H1 (cell line): ENCODE measurements at regions of chr16 and their contacts with region 1.

Region 1: GRCh38 chr16:23280483-23280967 is 21.6 kb upstream of the SCNN1B start:
- DNase-seq: no peak
- H3K4me3 ChIP-seq: no peak overlapping the region
- H3K27ac ChIP-seq: no peak overlapping the region
- H3K4me1 ChIP-seq: peaks cover 0 to 6% (median 0%) of the 10 kb centered on the region in 4 experiments; a peak in 3 of 7 replicates
- H3K27me3 ChIP-seq: no peaks in the 10 kb centered on the region
- CTCF ChIP-seq: no peak
- EP300 ChIP-seq: no peak
- POLR2A ChIP-seq: no peak
- RAD21 ChIP-seq: no peak

Region 2: DNA sequence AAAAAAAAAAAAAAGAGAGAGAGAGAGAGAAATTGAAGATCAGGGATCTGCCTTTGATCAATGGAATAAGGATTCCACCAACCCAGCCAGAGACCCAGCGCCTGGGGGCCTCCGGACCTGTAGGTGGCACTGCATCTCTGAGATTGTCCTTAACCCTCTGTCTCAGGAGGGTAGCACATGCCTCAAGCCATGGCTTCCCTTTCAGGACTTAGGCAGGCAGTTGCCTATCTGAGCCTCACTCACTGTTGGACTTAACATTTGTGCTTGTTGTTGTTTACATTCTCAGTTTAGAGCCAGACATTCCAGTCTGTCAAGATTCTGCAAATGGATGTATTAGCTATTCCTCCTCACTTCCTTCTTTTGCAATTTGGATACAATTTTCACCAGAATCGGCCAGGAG is 16.5 kb after region 1 on chr16:
- CTCF ChIA-PET with region 1: interaction called, 16 read pairs
- POLR2A ChIA-PET with region 1: interaction called, 3 read pairs
- DNase-seq: peak in 1 of 2 experiments; percentile 81
- H3K4me3 ChIP-seq: no peak overlapping the region
- H3K27ac ChIP-seq: no peak overlapping the region
- H3K4me1 ChIP-seq: peaks cover 0 to 6% (median 1%) of the 10 kb centered on the region in 4 experiments; a peak in 3 of 7 replicates
- H3K27me3 ChIP-seq: peaks cover 3 to 8% (median 6%) of the 10 kb centered on the region in 4 experiments
- CTCF ChIP-seq: peak; percentile 67 to 88 (median 78)
- EP300 ChIP-seq: no peak
- POLR2A ChIP-seq: no peak
- RAD21 ChIP-seq: peak; percentile 57 to 64